Activated B cell treated with CpG ODN at 0.5 μM for 24 hours (primary cell): ENCODE measurements at regions of chr17 and their contacts with region 1.

Region 1: GRCh38 chr17:64129764-64130558 is at the start of gene ERN1:
- DNase-seq: peak; percentile 81
- ATAC-seq: peak; percentile 88
- H3K4me3 Mint-ChIP-seq: peak within 1 kb of the TSS; percentile 83
- H3K27ac Mint-ChIP-seq: peak within 1 kb of the TSS; percentile 88
- H3K4me1 Mint-ChIP-seq: peaks cover 27% of the 10 kb centered on the region
- H3K27me3 Mint-ChIP-seq: peaks cover 1% of the 10 kb centered on the region
- CTCF ChIP-seq: no peak
- total RNA-seq, gene ERN1: 11.9 and 12.9 TPM in 2 replicates

Region 2: GRCh38 chr17:63601439-63602371 is 528.3 kb before region 1 on chr17:
- CTCF ChIA-PET with region 1: no interaction called
- POLR2A ChIA-PET with region 1: no interaction called
- intact Hi-C with region 1: no loop called
- DNase-seq: no peak
- ATAC-seq: no peak
- H3K4me3 Mint-ChIP-seq: peak overlapping the region; percentile 89
- H3K27ac Mint-ChIP-seq: peak overlapping the region; percentile 71
- H3K4me1 Mint-ChIP-seq: peaks cover 17% of the 10 kb centered on the region
- H3K27me3 Mint-ChIP-seq: no peaks in the 10 kb centered on the region
- CTCF ChIP-seq: no peak

Region 3: DNA sequence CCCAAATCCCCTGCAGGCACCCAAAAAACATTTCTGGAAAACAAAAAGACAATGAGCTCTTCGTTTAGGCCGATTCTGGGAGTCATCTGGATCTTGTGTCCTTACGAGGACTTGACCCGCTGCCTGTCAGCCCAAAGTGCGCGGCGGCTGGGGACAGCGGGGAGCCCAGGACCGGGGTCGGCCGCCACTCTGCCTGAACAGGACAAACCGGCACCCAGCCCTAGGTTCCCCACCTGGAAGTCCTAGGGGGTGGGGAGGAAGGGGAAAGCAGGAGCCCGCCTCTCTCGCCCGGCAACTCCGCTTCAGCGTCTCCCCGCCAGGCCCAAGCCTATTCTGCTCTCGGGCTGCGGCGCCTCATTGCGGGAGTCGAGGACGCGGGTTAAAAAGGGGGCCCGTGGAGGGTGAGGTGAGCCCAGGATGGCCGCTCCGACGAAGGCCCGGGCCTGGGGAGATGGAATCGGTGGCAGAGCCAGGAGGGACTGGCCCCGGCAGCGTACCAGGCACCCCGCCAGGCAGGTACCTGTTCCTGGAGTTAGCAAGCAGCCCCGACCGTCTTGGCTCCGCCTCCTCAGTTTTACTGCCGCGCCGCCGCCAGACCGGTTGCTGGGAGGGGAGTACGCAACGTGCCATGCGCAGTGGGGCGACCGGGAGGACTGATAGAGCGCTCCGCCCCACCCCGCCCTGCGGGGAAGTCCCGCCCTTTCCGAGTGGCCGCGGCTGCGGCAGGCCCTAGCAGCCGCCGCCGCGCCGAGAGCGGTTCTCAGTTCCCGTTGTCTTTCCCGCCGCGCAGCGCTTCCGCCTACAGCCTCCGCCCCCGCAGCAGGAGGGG is 388.5 kb before region 1 on chr17 and contains the start of gene STRADA:
- CTCF ChIA-PET with region 1: no interaction called
- POLR2A ChIA-PET with region 1: no interaction called
- intact Hi-C with region 1: loop called (anchors 1 kb)
- DNase-seq: peak; percentile 99
- ATAC-seq: peak; percentile 86
- H3K4me3 Mint-ChIP-seq: peak within 1 kb of the TSS; percentile 86
- H3K27ac Mint-ChIP-seq: peak within 1 kb of the TSS; percentile 96
- H3K4me1 Mint-ChIP-seq: peaks cover 28% of the 10 kb centered on the region
- H3K27me3 Mint-ChIP-seq: no peaks in the 10 kb centered on the region
- CTCF ChIP-seq: no peak
- total RNA-seq, gene STRADA: 72.5 and 80.2 TPM in 2 replicates

Region 4: DNA sequence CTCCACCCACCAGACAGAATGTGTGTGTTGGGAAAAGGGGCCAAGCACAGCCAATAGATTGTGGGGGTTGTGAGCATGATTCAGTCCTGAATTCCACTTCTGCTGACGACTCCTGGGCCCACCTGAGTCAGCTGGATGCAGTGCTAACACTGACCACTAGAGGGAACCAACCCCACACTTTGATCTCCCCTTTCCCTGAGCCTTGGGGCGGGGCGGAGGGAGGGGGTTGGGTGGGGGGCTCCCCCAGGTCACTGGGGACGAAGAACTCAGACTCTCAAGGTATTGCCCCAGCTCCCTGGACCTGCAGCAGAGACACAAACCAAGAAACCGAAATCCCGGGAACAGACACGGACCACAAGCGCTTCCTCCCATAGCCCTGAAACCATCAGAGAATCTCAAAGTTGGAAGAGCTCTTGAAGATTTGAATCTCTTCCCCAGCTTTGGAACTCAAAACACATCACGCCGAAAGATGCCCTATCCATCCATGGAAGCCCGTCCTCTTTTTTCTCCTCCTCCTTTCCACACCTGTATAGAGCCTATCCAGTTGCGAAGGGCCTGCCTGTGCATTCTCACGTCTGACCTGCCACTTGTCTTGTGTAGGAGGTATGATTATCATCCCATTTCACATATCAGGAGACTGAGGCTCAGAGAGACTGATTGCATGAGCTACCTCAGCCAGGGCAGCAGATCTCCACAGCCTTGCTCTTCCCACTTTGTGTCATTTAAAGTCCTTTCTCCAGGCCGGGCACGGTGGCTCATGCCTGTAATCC is 218.1 kb before region 1 on chr17:
- CTCF ChIA-PET with region 1: interaction called, 116 read pairs
- POLR2A ChIA-PET with region 1: interaction called, 4 read pairs
- intact Hi-C with region 1: loop called (anchors 1 kb)
- DNase-seq: peak; percentile 59
- ATAC-seq: peak; percentile 57
- H3K4me3 Mint-ChIP-seq: no peak overlapping the region
- H3K27ac Mint-ChIP-seq: peak overlapping the region; percentile 35
- H3K4me1 Mint-ChIP-seq: peaks cover 52% of the 10 kb centered on the region
- H3K27me3 Mint-ChIP-seq: peaks cover 1% of the 10 kb centered on the region
- CTCF ChIP-seq: no peak

Region 5: GRCh38 chr17:64020056-64020766 is 109.8 kb before region 1 on chr17 and contains the start of gene ICAM2:
- CTCF ChIA-PET with region 1: interaction called, 411 read pairs
- POLR2A ChIA-PET with region 1: interaction called, 22 read pairs
- intact Hi-C with region 1: no loop called
- DNase-seq: peak; percentile 69
- ATAC-seq: peak; percentile 78
- H3K4me3 Mint-ChIP-seq: peak within 1 kb of the TSS; percentile 97
- H3K27ac Mint-ChIP-seq: peak within 1 kb of the TSS; percentile 99
- H3K4me1 Mint-ChIP-seq: peaks cover 81% of the 10 kb centered on the region
- H3K27me3 Mint-ChIP-seq: no peaks in the 10 kb centered on the region
- CTCF ChIP-seq: no peak
- total RNA-seq, gene ICAM2: 44.5 and 44.7 TPM in 2 replicates

Region 6: DNA sequence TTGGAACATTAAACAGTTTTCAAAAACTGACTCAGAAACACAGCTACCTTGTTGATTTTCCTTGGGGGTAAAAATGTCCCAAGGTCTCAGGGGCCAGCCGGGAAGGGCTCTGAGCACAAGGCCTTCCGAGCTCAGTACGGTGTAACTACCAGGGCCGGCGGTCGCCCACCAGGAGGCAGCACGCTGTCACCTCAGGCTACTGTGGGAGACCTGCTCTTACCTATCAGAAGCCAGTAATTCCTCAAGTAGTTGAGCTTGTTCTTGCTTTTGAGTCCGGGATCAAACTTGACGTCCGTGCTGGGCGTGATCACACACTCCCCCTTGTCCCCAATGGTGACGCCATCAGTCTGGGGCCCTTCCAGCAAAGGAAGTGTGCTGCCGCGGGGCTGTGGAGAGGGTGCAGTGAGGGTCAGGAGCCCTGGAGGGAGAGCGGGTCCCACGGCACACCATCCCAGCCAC is 66.2 kb before region 1 on chr17:
- CTCF ChIA-PET with region 1: interaction called, 55 read pairs
- POLR2A ChIA-PET with region 1: interaction called, 5 read pairs
- intact Hi-C with region 1: loop called (anchors 1 kb)
- DNase-seq: no peak
- ATAC-seq: peak; percentile 58
- H3K4me3 Mint-ChIP-seq: no peak overlapping the region
- H3K27ac Mint-ChIP-seq: no peak overlapping the region
- H3K4me1 Mint-ChIP-seq: peaks cover 14% of the 10 kb centered on the region
- H3K27me3 Mint-ChIP-seq: no peaks in the 10 kb centered on the region
- CTCF ChIP-seq: no peak

Region 7: GRCh38 chr17:64145757-64146417 is 15.9 kb after region 1 on chr17:
- CTCF ChIA-PET with region 1: interaction called, 22 read pairs
- POLR2A ChIA-PET with region 1: interaction called, 103 read pairs
- intact Hi-C with region 1: loop called (anchors 1 kb)
- DNase-seq: peak; percentile 84
- ATAC-seq: peak; percentile 94
- H3K4me3 Mint-ChIP-seq: no peak overlapping the region
- H3K27ac Mint-ChIP-seq: no peak overlapping the region
- H3K4me1 Mint-ChIP-seq: peaks cover 16% of the 10 kb centered on the region
- H3K27me3 Mint-ChIP-seq: no peaks in the 10 kb centered on the region
- CTCF ChIP-seq: no peak

Region 8: GRCh38 chr17:64315032-64315490 is 185.1 kb after region 1 on chr17:
- CTCF ChIA-PET with region 1: no interaction called
- POLR2A ChIA-PET with region 1: no interaction called
- intact Hi-C with region 1: no loop called
- DNase-seq: no peak
- ATAC-seq: no peak
- H3K4me3 Mint-ChIP-seq: no peak overlapping the region
- H3K27ac Mint-ChIP-seq: no peak overlapping the region
- H3K4me1 Mint-ChIP-seq: peaks cover 9% of the 10 kb centered on the region
- H3K27me3 Mint-ChIP-seq: peaks cover 2% of the 10 kb centered on the region
- CTCF ChIP-seq: no peak